ENCODE measurements at regions of chr3 and their contacts with region 1.

Region 1: GRCh38 chr3:170689893-170690660 is 104.2 kb upstream of the SLC7A14 start:
- DNase-seq: peak; percentile 58
- CTCF ChIP-seq: peak; percentile 68

Region 2: DNA sequence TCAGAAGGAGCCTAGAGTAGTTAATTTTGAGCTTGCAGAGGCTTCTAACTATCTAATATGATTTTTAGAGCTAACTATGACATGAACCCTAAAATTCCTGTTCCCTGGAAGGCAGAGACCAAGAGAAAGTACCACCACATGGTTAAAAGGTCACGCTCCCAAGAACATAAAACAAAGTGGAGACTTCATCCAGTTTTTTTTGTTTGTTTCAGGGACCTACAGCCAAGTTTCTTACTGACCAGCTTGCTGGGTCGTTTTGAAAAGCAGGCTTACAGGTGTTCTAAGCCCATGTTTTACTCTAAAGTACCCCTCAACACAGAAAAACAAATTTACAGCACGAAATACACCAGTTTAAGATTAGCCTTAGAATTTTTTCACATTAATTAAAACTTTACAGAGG is 372.1 kb before region 1 on chr3:
- in situ Hi-C with region 1: loop called (anchors 10 kb)
- DNase-seq: no peak
- CTCF ChIP-seq: no peak

Region 3: DNA sequence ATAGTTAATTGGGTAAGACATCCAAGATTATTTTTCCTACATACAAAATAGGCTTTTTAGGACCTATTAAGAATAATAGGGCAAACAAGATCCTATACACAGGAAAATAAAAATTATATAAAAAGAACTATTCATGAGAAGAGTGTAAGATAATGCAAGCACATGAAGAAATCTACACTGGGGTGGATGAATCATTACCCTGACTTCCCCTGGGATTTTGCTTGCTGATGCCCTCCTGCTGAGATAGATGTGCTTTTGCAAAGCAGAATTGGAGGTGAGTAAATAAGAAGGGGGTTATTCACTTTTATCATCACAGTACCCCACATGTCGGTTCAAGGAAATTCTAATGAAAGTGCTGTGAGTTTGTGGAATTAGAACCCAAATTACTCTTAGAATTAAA is 287.8 kb after region 1 on chr3:
- in situ Hi-C with region 1: no loop called
- DNase-seq: no peak
- CTCF ChIP-seq: no peak